CD8-positive, alpha-beta T cell (primary cell): ENCODE measurements at regions of chr12 and their contacts with region 1.

Region 1: DNA sequence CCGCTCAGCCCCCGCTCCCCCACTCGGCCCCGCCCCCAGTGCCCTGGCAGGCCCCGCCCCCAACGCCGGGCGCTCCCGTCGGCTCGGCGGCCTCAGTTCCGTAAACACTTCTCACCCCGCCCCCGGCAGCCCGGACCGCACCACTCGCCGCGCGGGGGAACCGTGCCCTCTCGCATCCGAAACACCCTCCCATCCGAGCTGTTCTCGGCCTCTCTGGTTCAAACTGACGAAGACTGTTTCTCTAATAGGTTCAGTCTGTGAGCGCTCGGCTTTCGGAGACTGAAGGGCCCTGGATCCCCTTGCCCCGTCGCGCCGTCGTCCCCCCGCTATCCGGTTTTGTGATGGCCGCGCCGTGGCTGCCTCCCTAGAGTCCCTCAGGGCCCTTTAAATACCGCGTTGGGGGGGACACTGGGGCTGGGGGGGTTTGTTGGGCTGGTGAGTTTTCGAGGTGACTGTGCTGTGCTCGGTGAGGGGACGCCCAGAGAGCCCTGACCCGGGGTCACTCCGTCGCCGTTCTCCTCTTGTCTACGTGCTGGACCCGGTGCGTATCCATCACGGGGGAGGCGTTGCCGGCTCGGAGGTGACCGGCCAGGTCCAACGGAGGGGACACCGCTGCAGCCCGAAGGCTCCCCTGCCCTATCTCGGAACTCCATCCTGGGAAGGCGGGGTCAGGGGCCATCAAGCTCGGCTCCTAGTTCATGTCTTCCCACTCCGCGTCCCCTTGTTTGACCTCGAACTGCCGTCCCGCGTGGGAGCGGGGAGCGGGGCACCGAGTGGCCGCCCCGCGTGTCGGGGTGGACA is at the start of gene TCP11L2:
- DNase-seq: peak; percentile 88 to 96 (median 93)
- ATAC-seq: peak; percentile 63
- H3K4me3 ChIP-seq: peak within 1 kb of the TSS; percentile 98 to 100
- H3K4me3 Mint-ChIP-seq: peak within 1 kb of the TSS; percentile 96
- H3K27ac ChIP-seq: peak within 1 kb of the TSS; percentile 99 to 100
- H3K27ac Mint-ChIP-seq: peak within 1 kb of the TSS; percentile 100
- H3K4me1 ChIP-seq: peaks cover 51% of the 10 kb centered on the region
- H3K4me1 Mint-ChIP-seq: peaks cover 61% of the 10 kb centered on the region
- H3K27me3 ChIP-seq: no peaks in the 10 kb centered on the region
- H3K27me3 Mint-ChIP-seq: no peaks in the 10 kb centered on the region
- CTCF ChIP-seq: no peak
- total RNA-seq, gene TCP11L2: 130 to 133 TPM

Region 2: DNA sequence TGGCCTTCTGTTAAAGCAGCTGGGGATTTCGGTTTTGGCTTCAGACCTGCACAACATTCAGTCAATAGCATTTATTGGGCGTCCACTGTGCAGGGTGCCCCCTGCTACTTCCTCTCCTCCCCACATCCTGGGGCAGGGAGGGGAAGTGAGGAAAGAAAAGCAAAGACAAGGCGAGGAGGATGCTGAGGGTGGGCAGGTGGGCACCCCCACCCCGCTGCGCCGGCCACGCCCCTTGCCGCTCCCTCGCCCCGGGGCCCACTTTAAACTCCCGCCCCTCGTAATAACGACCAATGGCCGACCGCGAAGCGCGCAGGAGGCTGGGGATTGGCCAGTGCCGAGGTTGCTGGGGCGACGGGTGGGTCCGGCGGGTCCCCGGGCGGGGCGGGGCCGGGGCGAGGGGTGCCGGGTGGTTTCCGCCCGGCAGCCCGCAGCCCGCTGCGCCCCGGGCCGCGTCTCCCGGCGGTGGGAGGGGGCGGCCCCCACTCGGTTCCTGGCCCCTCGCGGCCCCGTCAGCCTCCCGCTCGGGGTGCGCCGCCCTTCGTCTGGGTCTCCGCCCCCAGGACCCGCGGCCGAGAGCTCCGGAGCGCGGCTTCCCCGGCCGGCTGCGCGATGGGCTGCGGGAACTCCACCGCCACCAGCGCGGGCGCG is 972.2 kb before region 1 on chr12 and contains the start of gene C12orf75:
- CTCF ChIA-PET with region 1: no interaction called
- POLR2A ChIA-PET with region 1: no interaction called
- intact Hi-C with region 1: loop called (anchors 5 kb)
- DNase-seq: peak; percentile 52 to 93 (median 85)
- ATAC-seq: peak; percentile 80
- H3K4me3 ChIP-seq: peak within 1 kb of the TSS; percentile 62 to 70
- H3K4me3 Mint-ChIP-seq: peak within 1 kb of the TSS; percentile 90
- H3K27ac ChIP-seq: peak within 1 kb of the TSS; percentile 48 to 74
- H3K27ac Mint-ChIP-seq: peak within 1 kb of the TSS; percentile 87
- H3K4me1 ChIP-seq: peaks cover 26% of the 10 kb centered on the region
- H3K4me1 Mint-ChIP-seq: peaks cover 60% of the 10 kb centered on the region
- H3K27me3 ChIP-seq: no peaks in the 10 kb centered on the region
- H3K27me3 Mint-ChIP-seq: no peaks in the 10 kb centered on the region
- CTCF ChIP-seq: no peak
- total RNA-seq, gene C12orf75: 27.5 to 27.9 TPM

Region 3: DNA sequence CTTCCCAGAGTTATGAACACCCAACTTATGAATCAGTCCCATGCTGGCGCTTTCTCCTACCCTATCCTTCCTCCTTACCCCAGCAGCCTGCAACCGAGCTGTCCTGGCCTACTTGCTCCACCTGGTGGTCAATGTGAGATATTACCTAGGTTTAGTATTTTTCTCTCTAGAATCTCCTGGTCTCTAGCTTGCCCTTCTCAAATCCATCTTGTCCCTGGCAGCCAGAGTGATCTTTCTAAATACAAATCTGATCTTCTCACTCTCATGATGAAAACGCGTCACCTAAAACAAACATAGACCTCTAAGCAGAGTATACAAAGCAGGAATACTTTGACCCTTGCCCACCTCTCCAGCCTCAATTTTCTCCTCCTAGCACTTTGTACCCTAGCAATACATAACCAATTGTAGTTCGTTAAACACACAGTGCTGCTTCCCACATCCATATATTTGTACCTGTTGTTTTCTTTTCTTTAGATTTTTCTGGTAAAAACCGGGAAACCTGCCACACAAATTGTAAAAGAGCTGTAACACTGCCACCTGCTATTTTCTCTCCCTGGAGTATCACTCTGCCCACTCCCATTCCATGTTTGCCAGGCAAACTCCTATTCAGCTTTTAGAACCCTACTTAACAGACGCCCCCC is 20.0 kb before region 1 on chr12:
- CTCF ChIA-PET with region 1: interaction called, 36 read pairs
- POLR2A ChIA-PET with region 1: interaction called, 10 read pairs
- intact Hi-C with region 1: loop called in 1 of 2 experiments (anchors 1 kb)
- DNase-seq: peak in 7 of 9 experiments; percentile 29 to 76 (median 54)
- ATAC-seq: peak; percentile 83
- H3K4me3 ChIP-seq: no peak overlapping the region
- H3K4me3 Mint-ChIP-seq: no peak overlapping the region
- H3K27ac ChIP-seq: no peak overlapping the region
- H3K27ac Mint-ChIP-seq: no peak overlapping the region
- H3K4me1 ChIP-seq: no peaks in the 10 kb centered on the region
- H3K4me1 Mint-ChIP-seq: peaks cover 4% of the 10 kb centered on the region
- H3K27me3 ChIP-seq: no peaks in the 10 kb centered on the region
- H3K27me3 Mint-ChIP-seq: peaks cover 10% of the 10 kb centered on the region
- CTCF ChIP-seq: peak; percentile 83

Region 4: DNA sequence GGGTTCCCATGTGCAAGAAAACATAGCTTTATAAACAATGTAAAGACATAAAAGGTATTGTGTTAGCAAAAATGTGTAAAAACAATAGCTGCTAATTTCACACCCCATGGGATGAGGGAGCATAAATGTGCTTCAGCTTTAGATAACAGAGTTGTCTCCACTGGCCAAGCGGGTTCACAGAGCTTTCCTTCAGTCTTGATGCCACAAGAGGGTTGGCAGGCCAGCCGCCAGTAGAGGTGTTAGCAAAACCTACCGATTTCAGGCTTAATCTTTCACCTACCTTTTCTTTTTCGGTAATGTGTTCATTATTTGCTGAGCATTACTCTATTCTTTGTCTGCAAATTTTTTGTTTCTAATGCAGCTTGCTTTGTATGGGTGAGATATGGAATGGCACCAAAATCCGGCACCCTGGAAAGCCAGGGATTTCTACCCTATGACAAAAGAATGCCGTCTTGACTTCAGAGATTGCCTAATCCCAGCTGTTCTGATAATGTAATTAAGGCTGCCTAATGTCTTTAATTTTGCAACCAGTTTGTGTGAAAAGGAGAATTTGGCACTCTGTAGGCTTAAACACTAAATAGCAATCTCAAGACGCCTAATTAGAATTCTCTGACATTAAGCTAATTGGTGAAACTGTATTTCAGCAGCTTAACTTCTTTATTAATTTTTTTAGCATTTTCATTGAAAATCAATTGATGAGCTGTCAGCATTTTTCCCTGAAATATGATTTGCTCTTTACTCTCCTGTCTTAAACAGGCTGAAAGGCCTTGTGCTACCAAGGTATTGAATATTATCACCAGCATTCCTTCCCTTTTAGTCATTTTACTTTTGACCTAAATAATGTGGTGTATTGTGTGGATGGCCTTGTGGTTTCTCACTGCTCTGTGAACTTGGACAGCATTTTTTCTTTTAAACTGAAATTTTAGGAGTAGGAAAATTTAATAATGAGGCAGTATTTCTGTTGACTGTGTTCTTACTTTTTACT is 115.6 kb after region 1 on chr12:
- CTCF ChIA-PET with region 1: no interaction called
- POLR2A ChIA-PET with region 1: no interaction called
- intact Hi-C with region 1: no loop called
- DNase-seq: no peak
- ATAC-seq: no peak
- H3K4me3 ChIP-seq: no peak overlapping the region
- H3K4me3 Mint-ChIP-seq: no peak overlapping the region
- H3K27ac ChIP-seq: no peak overlapping the region
- H3K27ac Mint-ChIP-seq: no peak overlapping the region
- H3K4me1 ChIP-seq: no peaks in the 10 kb centered on the region
- H3K4me1 Mint-ChIP-seq: no peaks in the 10 kb centered on the region
- H3K27me3 ChIP-seq: no peaks in the 10 kb centered on the region
- H3K27me3 Mint-ChIP-seq: no peaks in the 10 kb centered on the region
- CTCF ChIP-seq: no peak

Region 5: GRCh38 chr12:106673141-106673540 is 370.5 kb after region 1 on chr12:
- CTCF ChIA-PET with region 1: no interaction called
- POLR2A ChIA-PET with region 1: no interaction called
- intact Hi-C with region 1: no loop called
- DNase-seq: no peak
- ATAC-seq: no peak
- H3K4me3 ChIP-seq: no peak overlapping the region
- H3K4me3 Mint-ChIP-seq: no peak overlapping the region
- H3K27ac ChIP-seq: no peak overlapping the region
- H3K27ac Mint-ChIP-seq: no peak overlapping the region
- H3K4me1 ChIP-seq: no peaks in the 10 kb centered on the region
- H3K4me1 Mint-ChIP-seq: no peaks in the 10 kb centered on the region
- H3K27me3 ChIP-seq: peaks cover 3% of the 10 kb centered on the region in 2 experiments
- H3K27me3 Mint-ChIP-seq: peaks cover 39% of the 10 kb centered on the region
- CTCF ChIP-seq: no peak

Region 6: DNA sequence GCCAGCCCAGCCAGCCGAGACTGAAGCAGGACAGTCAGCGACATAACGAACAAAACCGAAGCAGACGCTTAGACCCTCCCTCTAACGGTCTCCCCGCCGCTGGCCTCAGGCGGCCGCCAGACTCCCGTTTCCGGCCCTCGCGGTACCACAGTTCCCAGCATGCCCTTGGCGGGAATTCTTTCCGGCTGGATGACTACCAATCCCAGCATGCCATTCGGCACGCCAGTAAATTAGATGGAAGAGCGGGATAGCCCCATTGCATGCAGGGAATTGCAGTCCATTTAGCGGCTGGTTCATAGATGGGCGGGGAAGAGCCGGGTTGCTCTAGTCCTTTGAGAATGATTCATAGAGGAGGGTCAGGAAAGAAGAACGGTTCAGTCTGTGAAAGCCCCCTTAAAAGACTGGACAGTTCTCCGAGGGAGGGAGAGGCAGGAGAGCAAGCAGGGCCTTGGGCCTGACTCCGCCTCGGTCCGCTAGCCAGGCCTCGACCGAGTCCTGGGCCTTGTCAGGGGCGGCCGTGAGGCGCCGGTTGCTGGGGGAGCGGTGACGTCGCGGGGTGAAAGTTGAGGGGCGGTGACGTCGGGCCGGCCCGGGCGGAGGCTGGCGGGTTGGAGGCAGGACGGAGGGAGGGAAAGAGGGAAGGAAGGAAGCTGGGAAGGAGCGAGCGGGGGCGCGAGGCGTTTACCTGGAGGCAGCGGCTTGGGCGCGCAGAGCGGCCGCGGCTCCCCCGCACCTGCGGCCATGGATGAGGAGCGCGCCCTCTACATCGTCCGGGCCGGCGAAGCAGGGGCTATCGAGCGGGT is 471.6 kb after region 1 on chr12 and contains the start of gene RIC8B:
- CTCF ChIA-PET with region 1: no interaction called
- POLR2A ChIA-PET with region 1: no interaction called
- intact Hi-C with region 1: loop called in 1 of 2 experiments (anchors 10 kb)
- DNase-seq: peak; percentile 56 to 92 (median 74)
- ATAC-seq: peak; percentile 81
- H3K4me3 ChIP-seq: peak within 1 kb of the TSS; percentile 80 to 96
- H3K4me3 Mint-ChIP-seq: peak within 1 kb of the TSS; percentile 96
- H3K27ac ChIP-seq: peak within 1 kb of the TSS; percentile 78 to 96
- H3K27ac Mint-ChIP-seq: peak within 1 kb of the TSS; percentile 99
- H3K4me1 ChIP-seq: peaks cover 19% of the 10 kb centered on the region
- H3K4me1 Mint-ChIP-seq: peaks cover 40% of the 10 kb centered on the region
- H3K27me3 ChIP-seq: no peaks in the 10 kb centered on the region
- H3K27me3 Mint-ChIP-seq: no peaks in the 10 kb centered on the region
- CTCF ChIP-seq: no peak
- total RNA-seq, gene RIC8B: 5.6 to 6.4 TPM

Region 7: DNA sequence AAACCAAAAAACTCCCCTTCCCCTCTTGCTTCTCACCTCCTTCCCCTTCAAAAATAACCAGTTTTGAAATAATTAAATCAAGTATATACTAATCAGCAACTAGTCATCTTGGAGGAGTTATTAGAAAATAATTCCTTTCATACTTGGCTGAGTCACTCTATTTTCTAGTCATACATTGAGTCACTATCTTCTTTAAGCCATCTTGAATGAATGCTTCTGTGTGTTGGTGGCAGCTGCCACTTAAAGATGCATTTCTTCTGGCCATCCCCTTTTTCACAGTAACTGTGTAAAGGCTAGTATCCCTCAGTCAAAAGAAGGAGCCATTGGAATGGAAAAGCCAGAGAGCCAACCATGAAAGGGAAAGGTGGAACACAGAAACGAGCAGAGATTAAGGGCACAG is 568.9 kb after region 1 on chr12:
- CTCF ChIA-PET with region 1: no interaction called
- POLR2A ChIA-PET with region 1: no interaction called
- intact Hi-C with region 1: no loop called
- DNase-seq: no peak
- ATAC-seq: no peak
- H3K4me3 ChIP-seq: no peak overlapping the region
- H3K4me3 Mint-ChIP-seq: no peak overlapping the region
- H3K27ac ChIP-seq: no peak overlapping the region
- H3K27ac Mint-ChIP-seq: no peak overlapping the region
- H3K4me1 ChIP-seq: no peaks in the 10 kb centered on the region
- H3K4me1 Mint-ChIP-seq: no peaks in the 10 kb centered on the region
- H3K27me3 ChIP-seq: no peaks in the 10 kb centered on the region
- H3K27me3 Mint-ChIP-seq: no peaks in the 10 kb centered on the region
- CTCF ChIP-seq: no peak

Region 8: GRCh38 chr12:107317751-107318613 is 1015.4 kb after region 1 on chr12:
- CTCF ChIA-PET with region 1: no interaction called
- POLR2A ChIA-PET with region 1: no interaction called
- intact Hi-C with region 1: loop called (anchors 5 kb)
- DNase-seq: peak; percentile 69 to 93 (median 86)
- ATAC-seq: peak; percentile 53
- H3K4me3 ChIP-seq: peak overlapping the region; percentile 69 to 74
- H3K4me3 Mint-ChIP-seq: peak overlapping the region; percentile 87
- H3K27ac ChIP-seq: peak overlapping the region; percentile 23 to 81
- H3K27ac Mint-ChIP-seq: peak overlapping the region; percentile 49
- H3K4me1 ChIP-seq: peaks cover 23% of the 10 kb centered on the region
- H3K4me1 Mint-ChIP-seq: peaks cover 36% of the 10 kb centered on the region
- H3K27me3 ChIP-seq: no peaks in the 10 kb centered on the region
- H3K27me3 Mint-ChIP-seq: no peaks in the 10 kb centered on the region
- CTCF ChIP-seq: peak; percentile 48